Activated naive CD4-positive, alpha-beta T cell treated with anti-CD3 and anti-CD28 coated beads for 36 hours (primary cell): ENCODE measurements at regions of chr4 and their contacts with region 1.

Region 1: GRCh38 chr4:184282251-184282713 is 64.6 kb upstream of the ENPP6 start:
- DNase-seq: peak; percentile 82
- H3K4me3 Mint-ChIP-seq: no peak overlapping the region
- H3K27ac Mint-ChIP-seq: peak overlapping the region; percentile 85
- H3K4me1 Mint-ChIP-seq: peaks cover 64% of the 10 kb centered on the region
- H3K27me3 Mint-ChIP-seq: peaks cover 4% of the 10 kb centered on the region

Region 2: GRCh38 chr4:184100297-184100885 is 181.9 kb before region 1 on chr4:
- CTCF ChIA-PET with region 1: no interaction called
- intact Hi-C with region 1: no loop called
- DNase-seq: peak; percentile 49
- H3K4me3 Mint-ChIP-seq: no peak overlapping the region
- H3K27ac Mint-ChIP-seq: no peak overlapping the region
- H3K4me1 Mint-ChIP-seq: no peaks in the 10 kb centered on the region
- H3K27me3 Mint-ChIP-seq: peaks cover 13% of the 10 kb centered on the region

Region 3: DNA sequence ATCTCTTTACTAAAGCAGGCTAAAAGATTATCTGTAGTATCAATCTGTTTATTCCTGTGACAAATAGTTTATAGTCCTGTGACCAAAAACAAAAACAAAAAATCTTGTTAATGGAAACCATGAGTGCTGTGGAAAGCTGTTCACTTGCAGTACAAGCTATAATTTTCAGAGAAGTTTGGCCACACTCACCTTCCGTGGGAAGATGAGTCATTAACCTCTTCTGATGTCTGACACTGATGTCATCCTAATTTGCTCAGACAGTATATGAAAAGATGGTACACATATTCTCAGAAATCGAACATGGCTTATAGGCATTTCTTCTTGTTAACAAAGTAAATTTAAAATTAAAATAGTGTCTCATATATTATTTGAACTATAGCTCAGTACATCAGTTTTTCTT is 44.7 kb before region 1 on chr4:
- CTCF ChIA-PET with region 1: no interaction called
- intact Hi-C with region 1: loop called (anchors 1 kb)
- DNase-seq: peak; percentile 84
- H3K4me3 Mint-ChIP-seq: peak overlapping the region; percentile 32
- H3K27ac Mint-ChIP-seq: peak overlapping the region; percentile 93
- H3K4me1 Mint-ChIP-seq: peaks cover 40% of the 10 kb centered on the region
- H3K27me3 Mint-ChIP-seq: no peaks in the 10 kb centered on the region

Region 4: DNA sequence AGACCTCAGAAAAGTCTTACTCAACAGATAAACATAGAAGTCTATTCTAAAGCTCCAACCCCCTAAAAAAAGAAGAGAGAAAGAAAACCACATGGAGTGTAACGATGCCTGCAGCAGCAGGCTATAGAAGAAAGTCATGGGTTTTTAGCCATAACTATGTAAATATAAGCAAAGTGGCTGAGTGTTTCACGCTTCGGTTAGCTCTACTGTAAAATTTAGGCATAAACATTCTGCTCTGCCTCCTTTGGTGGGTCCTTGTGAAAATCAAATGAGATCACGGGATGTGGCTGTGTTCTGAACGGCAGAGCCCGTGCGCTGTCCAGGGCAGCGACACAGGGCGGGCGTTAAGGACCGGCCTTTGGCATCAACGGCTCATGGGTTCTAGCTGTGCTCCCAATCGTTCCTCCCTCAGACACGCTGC is 113.7 kb after region 1 on chr4:
- CTCF ChIA-PET with region 1: no interaction called
- intact Hi-C with region 1: no loop called
- DNase-seq: no peak
- H3K4me3 Mint-ChIP-seq: no peak overlapping the region
- H3K27ac Mint-ChIP-seq: no peak overlapping the region
- H3K4me1 Mint-ChIP-seq: peaks cover 14% of the 10 kb centered on the region
- H3K27me3 Mint-ChIP-seq: no peaks in the 10 kb centered on the region

Region 5: GRCh38 chr4:184459413-184459812 is 177.1 kb after region 1 on chr4:
- CTCF ChIA-PET with region 1: interaction called, 5 read pairs
- intact Hi-C with region 1: loop called (anchors 1 kb)
- DNase-seq: no peak
- H3K4me3 Mint-ChIP-seq: no peak overlapping the region
- H3K27ac Mint-ChIP-seq: peak overlapping the region; percentile 14
- H3K4me1 Mint-ChIP-seq: peaks cover 72% of the 10 kb centered on the region
- H3K27me3 Mint-ChIP-seq: no peaks in the 10 kb centered on the region

Region 6: GRCh38 chr4:184575306-184575705 is 293.0 kb after region 1 on chr4:
- CTCF ChIA-PET with region 1: no interaction called
- intact Hi-C with region 1: loop called (anchors 2 kb)
- DNase-seq: no peak
- H3K4me3 Mint-ChIP-seq: no peak overlapping the region
- H3K27ac Mint-ChIP-seq: no peak overlapping the region
- H3K4me1 Mint-ChIP-seq: peaks cover 13% of the 10 kb centered on the region
- H3K27me3 Mint-ChIP-seq: no peaks in the 10 kb centered on the region

Region 7: GRCh38 chr4:184851200-184851541 is 568.9 kb after region 1 on chr4:
- CTCF ChIA-PET with region 1: no interaction called
- intact Hi-C with region 1: loop called (anchors 5 kb)
- DNase-seq: peak; percentile 74
- H3K4me3 Mint-ChIP-seq: no peak overlapping the region
- H3K27ac Mint-ChIP-seq: no peak overlapping the region
- H3K4me1 Mint-ChIP-seq: peaks cover 29% of the 10 kb centered on the region
- H3K27me3 Mint-ChIP-seq: no peaks in the 10 kb centered on the region

Region 8: DNA sequence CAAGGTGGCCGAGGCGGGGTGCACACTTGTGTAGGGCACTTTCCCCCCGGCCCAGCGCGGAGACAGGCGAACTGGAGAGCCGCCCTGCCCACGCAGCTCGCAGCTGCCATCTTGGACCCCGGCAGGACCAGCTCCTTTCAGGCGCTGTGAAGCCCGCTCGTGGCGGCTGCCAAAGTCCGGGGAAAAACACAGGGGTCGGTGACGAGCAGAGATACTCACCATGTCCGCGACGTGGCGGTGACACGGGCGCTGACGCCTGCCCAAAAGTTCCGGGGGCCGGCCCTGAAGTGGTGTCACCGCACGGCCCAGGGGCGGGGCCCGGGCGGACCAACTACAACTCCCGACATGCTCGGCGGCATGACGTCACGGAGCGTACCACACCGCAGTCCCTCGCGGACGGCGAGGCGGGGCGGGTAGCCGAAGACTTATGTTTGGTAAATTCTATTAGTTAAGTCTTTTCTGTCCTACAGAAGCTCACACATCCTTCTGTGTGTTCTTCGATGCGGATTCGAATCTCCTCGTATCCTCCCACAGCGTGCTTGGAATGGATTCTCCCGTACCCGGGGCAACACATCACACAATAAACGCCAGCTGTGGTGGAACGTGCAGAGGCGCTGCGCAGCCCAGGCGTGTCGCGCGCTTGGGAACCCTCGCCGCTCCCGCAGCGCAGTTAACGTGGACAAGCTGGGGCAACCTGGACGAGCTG is 1143.5 kb after region 1 on chr4 and contains the start of gene UFSP2:
- CTCF ChIA-PET with region 1: no interaction called
- intact Hi-C with region 1: no loop called
- DNase-seq: peak; percentile 86
- H3K4me3 Mint-ChIP-seq: peak within 1 kb of the TSS; percentile 76
- H3K27ac Mint-ChIP-seq: peak within 1 kb of the TSS; percentile 96
- H3K4me1 Mint-ChIP-seq: peaks cover 28% of the 10 kb centered on the region
- H3K27me3 Mint-ChIP-seq: peaks cover 1% of the 10 kb centered on the region
- total RNA-seq, gene UFSP2: 24.4 to 30.7 TPM